Ascending aorta (tissue), 2 donors: ENCODE measurements at regions of chr13 and their contacts with region 1.

Region 1: DNA sequence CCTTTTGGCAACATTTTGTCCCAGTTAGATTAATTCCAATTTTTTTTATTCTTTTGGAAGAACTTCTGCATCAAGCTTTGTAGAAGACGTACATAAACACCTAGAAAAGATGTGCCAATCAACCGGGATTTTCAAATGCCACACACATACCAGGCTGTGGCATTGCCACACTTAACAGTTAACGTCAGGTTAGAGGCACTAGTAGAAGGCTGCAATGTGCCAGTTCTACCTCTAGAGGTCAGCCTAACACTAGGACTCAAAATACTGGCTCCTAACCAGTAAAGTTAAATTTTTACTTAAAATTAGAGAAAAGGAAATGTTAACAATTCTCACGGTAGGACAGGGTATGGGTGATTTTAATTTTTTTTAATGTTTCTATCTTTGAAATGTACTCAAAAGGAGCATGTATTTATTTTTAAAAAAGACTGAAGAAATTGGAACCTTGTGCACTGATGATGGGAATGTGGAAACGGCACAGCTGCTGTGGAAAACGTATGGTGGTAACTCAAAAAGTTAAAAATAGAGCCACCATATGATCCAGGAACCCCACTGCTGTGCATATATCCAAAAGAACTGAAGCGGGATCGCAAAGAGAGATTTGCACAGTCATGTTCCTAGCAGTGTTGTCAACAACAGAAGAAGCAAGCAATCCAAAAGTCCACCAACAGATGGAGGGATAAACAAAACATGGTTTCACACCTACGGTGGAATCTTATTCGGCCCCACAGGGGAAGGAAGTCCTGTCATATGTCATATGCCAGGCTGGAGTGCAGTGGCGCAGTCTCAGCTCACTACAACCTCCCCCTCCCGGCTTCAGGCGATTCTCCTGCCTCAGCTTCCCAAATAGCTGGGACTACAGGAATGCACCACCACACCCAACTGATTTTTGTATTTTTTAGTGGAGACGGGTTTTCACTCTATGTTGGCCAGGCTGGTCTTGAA is 30.3 kb downstream of the CRYL1 start:
- DNase-seq: peak in 1 of 2 donors; percentile 81
- H3K4me3 ChIP-seq: peak overlapping the region in 1 of 2 donors; percentile 34
- H3K27ac ChIP-seq: no peak overlapping the region
- H3K4me1 ChIP-seq: peaks cover 0 to 4% of the 10 kb centered on the region in 2 donors
- H3K27me3 ChIP-seq: no peaks in the 10 kb centered on the region
- CTCF ChIP-seq: peak; percentile 68 to 94 (median 93)

Region 2: DNA sequence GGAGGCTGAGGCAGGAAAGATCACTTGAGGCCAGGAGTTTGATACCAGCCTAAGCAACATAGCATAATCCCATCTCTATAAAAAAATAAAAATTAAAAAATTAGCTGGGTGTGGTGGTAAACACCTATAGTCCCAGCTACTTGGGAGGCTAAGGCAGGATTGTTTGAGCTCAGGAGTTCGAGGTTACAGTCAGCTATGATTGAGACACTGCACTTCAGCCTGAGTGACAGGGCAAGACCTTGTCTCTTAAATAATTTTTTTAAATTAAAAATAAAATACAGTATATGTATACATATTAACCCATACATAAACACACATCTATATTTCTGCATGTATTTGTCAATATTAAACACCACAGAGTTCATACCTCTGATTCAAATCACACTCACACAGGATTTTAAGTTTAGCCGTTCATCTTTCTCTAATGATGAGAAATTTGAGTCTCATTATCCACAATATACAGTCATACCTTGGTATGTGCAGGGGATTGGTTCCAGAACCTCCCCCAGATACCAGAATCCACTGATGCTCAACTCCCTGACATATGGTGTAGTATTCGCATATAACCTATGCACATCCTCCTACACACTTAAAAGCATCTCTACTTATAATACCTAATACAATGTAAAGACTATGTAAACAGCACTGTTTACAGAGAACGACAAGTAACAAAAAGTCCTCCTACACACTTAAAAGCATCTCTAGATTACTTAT is 757.4 kb before region 1 on chr13:
- intact Hi-C with region 1: no loop called
- DNase-seq: no peak
- H3K4me3 ChIP-seq: no peak overlapping the region
- H3K27ac ChIP-seq: no peak overlapping the region
- H3K4me1 ChIP-seq: no peaks in the 10 kb centered on the region
- H3K27me3 ChIP-seq: no peaks in the 10 kb centered on the region
- CTCF ChIP-seq: no peak

Region 3: GRCh38 chr13:20197361-20197834 is 298.0 kb before region 1 on chr13:
- intact Hi-C with region 1: loop called (anchors 10 kb)
- DNase-seq: no peak
- H3K4me3 ChIP-seq: peak overlapping the region in 1 of 2 donors; percentile 30
- H3K27ac ChIP-seq: no peak overlapping the region
- H3K4me1 ChIP-seq: peaks cover 7 to 17% of the 10 kb centered on the region in 2 donors
- H3K27me3 ChIP-seq: peaks cover 17% of the 10 kb centered on the region
- CTCF ChIP-seq: peak; percentile 17 to 70 (median 58)

Region 4: GRCh38 chr13:20546556-20546955 is 51.2 kb after region 1 on chr13:
- intact Hi-C with region 1: no loop called
- DNase-seq: no peak
- H3K4me3 ChIP-seq: no peak overlapping the region
- H3K27ac ChIP-seq: no peak overlapping the region
- H3K4me1 ChIP-seq: no peaks in the 10 kb centered on the region
- H3K27me3 ChIP-seq: no peaks in the 10 kb centered on the region
- CTCF ChIP-seq: no peak

Region 5: DNA sequence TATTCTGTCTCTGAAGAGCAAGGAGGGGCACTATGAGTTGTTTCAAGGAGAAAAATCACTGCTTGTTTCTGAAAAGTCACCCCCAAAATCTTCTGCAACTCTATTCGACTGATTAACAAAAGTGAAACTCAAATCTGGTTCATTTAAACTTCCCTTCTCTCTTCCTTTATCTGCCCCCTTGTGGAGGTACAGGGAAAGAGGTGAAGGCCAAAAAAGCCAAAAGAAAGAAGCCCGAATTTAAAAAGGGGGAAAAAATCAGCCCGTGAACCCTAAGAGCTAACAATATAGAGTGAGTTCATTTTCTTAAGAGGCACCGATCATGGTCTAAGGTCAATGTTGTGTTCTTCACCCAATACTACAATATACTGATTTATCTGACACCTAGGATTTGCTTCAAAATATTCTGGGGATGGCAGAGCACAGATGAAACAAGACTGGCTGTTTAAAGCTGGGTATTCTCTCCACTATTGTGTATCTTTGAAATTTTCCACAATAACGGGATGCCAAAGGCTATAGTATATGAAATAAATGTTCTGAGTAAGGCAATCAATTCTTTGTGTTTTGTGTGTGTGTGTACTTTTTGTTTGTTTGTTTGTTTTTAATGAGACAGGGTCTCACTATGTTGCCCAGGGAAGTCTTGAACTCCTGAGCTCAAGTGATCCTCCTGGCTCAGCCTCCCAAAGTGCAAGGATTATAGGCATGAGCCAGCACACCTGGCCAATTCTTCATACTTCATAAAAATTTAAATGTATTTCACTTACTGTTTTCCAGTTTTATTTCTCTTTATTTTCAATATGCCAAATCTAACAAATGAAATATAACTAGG is 333.4 kb after region 1 on chr13:
- intact Hi-C with region 1: loop called (anchors 5 kb)
- DNase-seq: no peak
- H3K4me3 ChIP-seq: peak overlapping the region; percentile 41 to 50
- H3K27ac ChIP-seq: peak overlapping the region in 1 of 2 donors; percentile 6
- H3K4me1 ChIP-seq: peaks cover 4 to 14% of the 10 kb centered on the region in 2 donors
- H3K27me3 ChIP-seq: no peaks in the 10 kb centered on the region
- CTCF ChIP-seq: peak; percentile 70 to 87 (median 73)

Region 6: GRCh38 chr13:20924758-20925394 is 429.5 kb after region 1 on chr13:
- intact Hi-C with region 1: loop called (anchors 2 kb)
- DNase-seq: peak in 1 of 2 donors; percentile 86
- H3K4me3 ChIP-seq: no peak overlapping the region
- H3K27ac ChIP-seq: no peak overlapping the region
- H3K4me1 ChIP-seq: no peaks in the 10 kb centered on the region
- H3K27me3 ChIP-seq: no peaks in the 10 kb centered on the region
- CTCF ChIP-seq: peak; percentile 45 to 77 (median 68)